ENCODE measurements at regions of chr16 and their contacts with region 1.

Region 1: DNA sequence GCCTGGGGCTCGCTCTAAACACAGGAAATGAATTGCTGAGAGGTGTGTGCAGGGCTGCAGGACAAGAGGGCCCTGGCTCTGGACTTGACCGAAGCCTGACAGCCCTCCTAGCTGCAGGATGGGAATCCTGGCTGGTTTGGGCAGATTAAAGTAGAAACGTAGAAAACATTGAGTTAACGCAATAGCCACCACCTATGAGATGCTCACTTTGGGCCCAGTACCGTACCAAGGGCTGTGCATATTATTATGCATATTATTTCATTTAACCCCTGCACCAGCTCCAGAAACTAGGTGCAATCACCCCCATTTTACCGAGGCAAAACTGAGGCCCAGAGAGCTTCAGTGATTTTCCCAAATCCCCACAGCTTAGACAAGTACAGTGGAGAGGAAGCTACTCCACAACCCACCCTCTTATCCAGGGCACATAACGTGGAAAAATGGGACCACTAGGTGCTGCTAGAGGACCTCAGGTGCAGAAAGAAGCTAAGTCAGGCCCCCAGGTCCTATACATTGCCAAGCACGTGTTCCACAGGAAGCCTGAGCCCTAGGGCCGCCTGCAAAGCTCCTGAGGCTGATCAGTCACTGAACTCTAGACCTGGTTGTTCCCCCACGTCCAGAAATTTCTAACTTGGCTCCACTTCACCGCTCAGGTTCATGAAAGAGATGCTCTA is 79.2 kb downstream of the MYH11 start:
- DNase-seq: no peak
- H3K4me3 ChIP-seq: no peak overlapping the region
- H3K27ac ChIP-seq: no peak overlapping the region
- H3K4me1 ChIP-seq: peaks cover 0 to 7% of the 10 kb centered on the region in 2 donors
- H3K27me3 ChIP-seq: no peaks in the 10 kb centered on the region
- CTCF ChIP-seq: peak in 1 of 4 experiments; percentile 5
- POLR2A ChIP-seq: no peak

Region 2: GRCh38 chr16:15672514-15673167 is 105.0 kb before region 1 on chr16:
- intact Hi-C with region 1: no loop called
- DNase-seq: peak; percentile 94 to 98
- H3K4me3 ChIP-seq: no peak overlapping the region
- H3K27ac ChIP-seq: peak overlapping the region; percentile 95 to 96
- H3K4me1 ChIP-seq: peaks cover 0 to 13% of the 10 kb centered on the region in 2 donors
- H3K27me3 ChIP-seq: no peaks in the 10 kb centered on the region
- CTCF ChIP-seq: no peak
- POLR2A ChIP-seq: peak; percentile 32 to 46

Region 3: DNA sequence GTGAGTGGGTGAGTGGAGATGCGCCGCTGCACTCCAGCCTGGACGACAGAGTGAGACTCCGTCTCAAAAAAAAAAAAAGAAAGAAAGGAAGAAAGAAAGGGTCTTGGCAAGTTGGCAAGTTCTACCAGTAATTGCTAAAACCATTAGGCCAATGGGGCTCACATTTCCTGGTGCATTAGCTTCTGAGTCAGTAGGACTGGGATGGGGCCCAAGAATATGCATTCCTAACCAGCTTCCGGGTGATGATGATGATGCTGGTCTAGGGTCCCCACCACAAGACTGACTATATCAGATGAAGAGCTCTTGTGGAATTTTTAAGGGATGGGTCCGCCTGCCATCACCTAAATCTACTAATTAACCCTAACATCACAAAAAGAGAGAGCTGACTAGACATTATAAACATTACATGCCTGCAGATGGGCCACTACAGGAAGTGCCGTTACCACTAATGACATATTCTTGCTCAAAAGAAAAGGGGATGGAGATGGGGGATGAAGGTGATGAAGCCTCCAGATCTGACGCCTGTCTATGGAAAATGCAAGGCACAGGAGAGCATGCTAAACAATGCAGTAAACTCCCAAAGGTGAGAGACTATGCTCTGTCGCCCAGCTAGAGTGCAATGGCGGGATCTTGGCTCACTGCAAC is 66.1 kb after region 1 on chr16:
- intact Hi-C with region 1: no loop called
- DNase-seq: no peak
- H3K4me3 ChIP-seq: no peak overlapping the region
- H3K27ac ChIP-seq: peak overlapping the region; percentile 73 to 92
- H3K4me1 ChIP-seq: no peaks in the 10 kb centered on the region
- H3K27me3 ChIP-seq: no peaks in the 10 kb centered on the region
- CTCF ChIP-seq: no peak
- POLR2A ChIP-seq: no peak

Region 4: GRCh38 chr16:16127469-16128116 is 349.9 kb after region 1 on chr16:
- intact Hi-C with region 1: loop called (anchors 10 kb)
- DNase-seq: peak; percentile 70 to 74
- H3K4me3 ChIP-seq: no peak overlapping the region
- H3K27ac ChIP-seq: peak overlapping the region; percentile 46 to 48
- H3K4me1 ChIP-seq: no peaks in the 10 kb centered on the region
- H3K27me3 ChIP-seq: no peaks in the 10 kb centered on the region
- CTCF ChIP-seq: peak; percentile 86 to 89 (median 88)
- POLR2A ChIP-seq: no peak